ENCODE measurements at regions of chr9 and their contacts with region 1.

Region 1: GRCh38 chr9:120936011-120936763 is 9.6 kb upstream of the TRAF1 start:
- DNase-seq: peak; percentile 75
- H3K4me3 Mint-ChIP-seq: peak overlapping the region; percentile 52
- H3K27ac Mint-ChIP-seq: peak overlapping the region; percentile 80
- H3K4me1 Mint-ChIP-seq: peaks cover 55% of the 10 kb centered on the region
- H3K27me3 Mint-ChIP-seq: peaks cover 2% of the 10 kb centered on the region

Region 2: GRCh38 chr9:120916588-120916987 is 19.6 kb before region 1 on chr9:
- intact Hi-C with region 1: loop called (anchors 2 kb)
- DNase-seq: no peak
- H3K4me3 Mint-ChIP-seq: peak overlapping the region; percentile 69
- H3K27ac Mint-ChIP-seq: peak overlapping the region; percentile 77
- H3K4me1 Mint-ChIP-seq: peaks cover 80% of the 10 kb centered on the region
- H3K27me3 Mint-ChIP-seq: no peaks in the 10 kb centered on the region

Region 3: GRCh38 chr9:121598965-121599871 is 663.0 kb after region 1 on chr9:
- intact Hi-C with region 1: no loop called
- DNase-seq: no peak
- H3K4me3 Mint-ChIP-seq: no peak overlapping the region
- H3K27ac Mint-ChIP-seq: no peak overlapping the region
- H3K4me1 Mint-ChIP-seq: no peaks in the 10 kb centered on the region
- H3K27me3 Mint-ChIP-seq: peaks cover 47% of the 10 kb centered on the region